ENCODE measurements at regions of chr20 and their contacts with region 1.

Region 1: GRCh38 chr20:3854462-3854871 is 7.8 kb downstream of the MAVS start:
- DNase-seq: no peak
- H3K4me3 Mint-ChIP-seq: no peak overlapping the region
- H3K27ac Mint-ChIP-seq: no peak overlapping the region
- H3K4me1 Mint-ChIP-seq: peaks cover 9% of the 10 kb centered on the region
- H3K27me3 Mint-ChIP-seq: no peaks in the 10 kb centered on the region
- CTCF ChIP-seq: no peak

Region 2: DNA sequence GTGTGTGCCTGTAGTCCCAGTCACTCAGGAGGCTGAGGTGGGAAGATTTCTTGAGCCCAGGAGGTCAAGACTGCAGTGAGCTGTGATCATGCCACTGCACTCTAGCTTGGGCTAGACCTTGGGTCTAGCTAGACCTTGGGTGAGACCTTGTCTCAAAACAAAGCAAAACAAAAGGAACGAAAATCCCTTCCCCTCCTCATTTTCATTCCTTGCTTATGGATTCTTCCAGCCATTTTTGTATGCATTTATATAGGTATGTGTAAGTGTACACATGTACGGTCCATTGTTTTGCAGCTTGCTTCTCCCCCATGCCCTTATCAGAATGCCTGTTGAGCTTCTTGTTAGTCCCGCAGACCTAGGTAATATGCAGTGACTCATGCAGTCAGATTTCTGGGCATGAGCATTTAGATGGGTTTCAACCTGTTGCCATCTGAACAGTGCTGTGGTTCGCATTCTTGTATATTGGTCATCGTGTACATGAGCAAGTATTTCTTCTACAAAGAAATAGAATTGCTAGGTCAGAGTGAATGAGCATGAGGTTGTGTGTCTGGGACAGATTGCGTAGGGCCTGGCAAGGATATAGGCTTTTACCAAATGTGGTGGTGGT is 310.5 kb before region 1 on chr20:
- CTCF ChIA-PET with region 1: no interaction called
- POLR2A ChIA-PET with region 1: no interaction called
- intact Hi-C with region 1: no loop called
- DNase-seq: peak; percentile 89
- H3K4me3 Mint-ChIP-seq: no peak overlapping the region
- H3K27ac Mint-ChIP-seq: peak overlapping the region; percentile 65
- H3K4me1 Mint-ChIP-seq: peaks cover 16% of the 10 kb centered on the region
- H3K27me3 Mint-ChIP-seq: no peaks in the 10 kb centered on the region
- CTCF ChIP-seq: no peak

Region 3: GRCh38 chr20:3734111-3734843 is 120.2 kb before region 1 on chr20:
- CTCF ChIA-PET with region 1: no interaction called
- POLR2A ChIA-PET with region 1: no interaction called
- intact Hi-C with region 1: no loop called
- DNase-seq: no peak
- H3K4me3 Mint-ChIP-seq: no peak overlapping the region
- H3K27ac Mint-ChIP-seq: no peak overlapping the region
- H3K4me1 Mint-ChIP-seq: peaks cover 18% of the 10 kb centered on the region
- H3K27me3 Mint-ChIP-seq: no peaks in the 10 kb centered on the region
- CTCF ChIP-seq: no peak

Region 4: DNA sequence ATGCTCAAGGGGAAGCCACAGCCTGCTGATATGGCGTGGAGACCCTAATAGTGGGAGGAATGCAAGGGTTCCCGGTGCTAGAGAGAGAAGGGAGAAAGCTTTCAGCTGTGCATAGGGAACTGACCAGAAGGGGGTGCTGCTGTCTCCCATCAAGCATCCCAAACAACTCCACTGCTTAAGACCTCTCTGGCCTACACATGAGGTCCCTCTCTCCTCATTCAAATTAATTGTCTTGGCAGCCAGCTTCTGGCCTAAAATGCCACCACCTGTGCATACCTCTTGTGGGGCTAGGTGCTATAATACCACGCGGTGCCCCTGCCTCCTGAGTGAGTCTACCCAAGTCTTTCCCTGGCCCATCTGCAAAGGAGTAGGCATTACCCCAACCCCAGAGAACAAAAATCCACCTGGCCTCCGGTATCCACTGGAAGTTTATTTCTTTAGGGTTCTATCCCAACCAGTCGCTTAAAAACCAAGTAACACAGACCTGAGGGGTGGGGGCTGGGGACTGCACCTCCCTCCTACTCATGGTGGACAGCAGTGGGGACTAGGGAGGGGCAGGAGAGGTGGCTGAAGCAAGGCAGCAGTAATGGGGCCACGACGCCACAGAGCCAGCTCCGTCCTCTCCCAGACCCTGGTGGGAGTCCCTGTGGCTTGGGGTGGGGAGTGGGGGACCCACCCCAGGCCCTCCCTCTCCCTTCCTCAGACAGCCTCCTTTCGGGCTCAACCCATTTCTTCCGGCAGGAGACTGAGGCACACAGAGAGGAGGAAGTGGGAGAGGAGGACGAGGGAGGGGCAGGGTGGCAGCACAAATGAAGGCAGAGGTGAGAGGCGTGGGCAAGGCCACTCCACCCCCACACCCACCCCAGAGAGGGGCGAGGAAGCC is 101.1 kb before region 1 on chr20:
- CTCF ChIA-PET with region 1: interaction called, 19 read pairs
- POLR2A ChIA-PET with region 1: no interaction called
- intact Hi-C with region 1: no loop called
- DNase-seq: peak; percentile 72
- H3K4me3 Mint-ChIP-seq: no peak overlapping the region
- H3K27ac Mint-ChIP-seq: no peak overlapping the region
- H3K4me1 Mint-ChIP-seq: no peaks in the 10 kb centered on the region
- H3K27me3 Mint-ChIP-seq: no peaks in the 10 kb centered on the region
- CTCF ChIP-seq: peak; percentile 78

Region 5: GRCh38 chr20:3786665-3787323 is 67.7 kb before region 1 on chr20 and contains the start of gene CENPB:
- CTCF ChIA-PET with region 1: interaction called, 22 read pairs
- POLR2A ChIA-PET with region 1: interaction called, 11 read pairs
- intact Hi-C with region 1: loop called (anchors 2 kb)
- DNase-seq: peak; percentile 84
- H3K4me3 Mint-ChIP-seq: peak within 1 kb of the TSS; percentile 76
- H3K27ac Mint-ChIP-seq: peak within 1 kb of the TSS; percentile 42
- H3K4me1 Mint-ChIP-seq: peaks cover 33% of the 10 kb centered on the region
- H3K27me3 Mint-ChIP-seq: no peaks in the 10 kb centered on the region
- CTCF ChIP-seq: peak; percentile 88
- total RNA-seq, gene CENPB: 51.5 and 54.8 TPM in 2 replicates

Region 6: DNA sequence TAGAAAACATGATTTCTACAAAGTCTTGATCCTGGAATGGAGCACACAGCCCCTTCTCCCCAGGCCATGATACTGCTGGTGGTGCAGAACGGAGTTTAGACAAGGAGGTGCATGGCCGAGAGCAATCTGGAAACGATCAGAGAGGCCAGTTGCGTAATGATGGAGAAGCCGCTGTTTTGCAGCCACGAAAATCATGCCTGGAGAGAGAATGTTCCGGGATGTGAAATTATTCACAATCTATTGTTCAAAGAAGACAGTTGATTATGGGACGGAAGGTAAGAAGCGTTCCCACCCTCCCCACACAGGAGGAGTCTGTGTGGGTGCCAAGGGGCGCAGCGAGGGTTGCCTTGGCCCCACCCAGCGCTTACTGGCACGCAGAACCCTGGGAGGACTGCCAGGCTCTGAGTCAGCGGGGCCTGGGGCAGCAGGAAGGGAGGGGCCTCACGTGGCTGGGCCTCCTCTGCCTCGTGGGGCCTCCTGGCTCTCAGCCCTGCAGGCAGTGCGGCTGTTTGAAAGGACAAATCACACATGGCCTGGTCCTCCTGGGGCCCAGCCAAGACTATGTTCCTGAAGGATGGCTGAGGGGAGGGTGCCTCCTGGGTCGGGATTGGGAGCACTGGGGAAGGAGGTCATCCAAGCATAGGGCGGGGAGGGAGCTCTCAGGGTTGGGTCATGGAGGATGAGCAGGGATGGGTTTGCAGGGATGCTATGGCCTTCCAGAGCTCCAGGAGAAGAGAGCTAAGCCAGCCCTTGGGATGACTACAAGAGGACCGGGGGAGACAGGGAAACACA is 42.8 kb before region 1 on chr20:
- CTCF ChIA-PET with region 1: interaction called, 13 read pairs
- POLR2A ChIA-PET with region 1: interaction called, 10 read pairs
- intact Hi-C with region 1: no loop called
- DNase-seq: peak; percentile 99
- H3K4me3 Mint-ChIP-seq: peak overlapping the region; percentile 83
- H3K27ac Mint-ChIP-seq: peak overlapping the region; percentile 95
- H3K4me1 Mint-ChIP-seq: peaks cover 33% of the 10 kb centered on the region
- H3K27me3 Mint-ChIP-seq: no peaks in the 10 kb centered on the region
- CTCF ChIP-seq: no peak

Region 7: DNA sequence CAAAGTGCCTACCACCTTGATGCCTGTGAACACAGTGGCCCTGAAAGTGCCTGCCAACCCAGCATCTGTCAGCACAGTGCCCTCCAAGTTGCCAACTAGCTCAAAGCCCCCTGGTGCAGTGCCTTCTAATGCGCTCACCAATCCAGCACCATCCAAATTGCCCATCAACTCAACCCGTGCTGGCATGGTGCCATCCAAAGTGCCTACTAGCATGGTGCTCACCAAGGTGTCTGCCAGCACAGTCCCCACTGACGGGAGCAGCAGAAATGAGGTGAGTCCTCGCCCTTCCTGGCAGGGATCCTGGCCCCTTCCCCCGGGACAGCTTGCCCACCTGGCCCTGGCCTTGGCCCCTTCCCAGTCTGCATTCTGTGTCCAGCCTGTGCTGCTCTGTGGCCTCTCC is 10.1 kb after region 1 on chr20:
- CTCF ChIA-PET with region 1: interaction called, 43 read pairs
- POLR2A ChIA-PET with region 1: interaction called, 15 read pairs
- intact Hi-C with region 1: no loop called
- DNase-seq: no peak
- H3K4me3 Mint-ChIP-seq: no peak overlapping the region
- H3K27ac Mint-ChIP-seq: no peak overlapping the region
- H3K4me1 Mint-ChIP-seq: no peaks in the 10 kb centered on the region
- H3K27me3 Mint-ChIP-seq: no peaks in the 10 kb centered on the region
- CTCF ChIP-seq: no peak

Region 8: GRCh38 chr20:3871550-3872297 is 17.3 kb after region 1 on chr20:
- CTCF ChIA-PET with region 1: interaction called, 43 read pairs
- POLR2A ChIA-PET with region 1: interaction called, 15 read pairs
- intact Hi-C with region 1: no loop called
- DNase-seq: peak; percentile 42
- H3K4me3 Mint-ChIP-seq: no peak overlapping the region
- H3K27ac Mint-ChIP-seq: peak overlapping the region; percentile 43
- H3K4me1 Mint-ChIP-seq: no peaks in the 10 kb centered on the region
- H3K27me3 Mint-ChIP-seq: no peaks in the 10 kb centered on the region
- CTCF ChIP-seq: no peak

Region 9: DNA sequence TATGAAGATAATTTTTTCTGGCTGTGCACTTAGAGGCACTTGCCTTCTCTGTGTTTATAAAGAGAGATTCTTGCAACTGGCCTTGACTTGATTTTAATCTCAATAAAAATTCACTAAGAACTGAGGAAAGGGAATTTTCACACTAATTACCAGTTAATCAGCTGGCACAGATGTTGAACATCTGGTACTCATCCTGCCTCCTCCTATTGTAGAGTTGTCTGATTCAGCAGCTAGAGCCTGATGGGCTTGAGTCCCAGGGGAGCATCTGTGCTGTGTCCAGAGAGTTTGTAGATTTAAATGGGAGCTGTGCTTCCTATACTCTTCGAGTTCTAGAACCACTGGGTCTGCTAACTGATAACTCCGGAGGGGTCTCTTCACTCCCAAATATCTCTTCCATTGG is 445.3 kb after region 1 on chr20:
- CTCF ChIA-PET with region 1: no interaction called
- POLR2A ChIA-PET with region 1: no interaction called
- intact Hi-C with region 1: no loop called
- DNase-seq: no peak
- H3K4me3 Mint-ChIP-seq: no peak overlapping the region
- H3K27ac Mint-ChIP-seq: no peak overlapping the region
- H3K4me1 Mint-ChIP-seq: no peaks in the 10 kb centered on the region
- H3K27me3 Mint-ChIP-seq: peaks cover 49% of the 10 kb centered on the region
- CTCF ChIP-seq: no peak